Esophagus squamous epithelium (tissue), 5 donors: ENCODE measurements at regions of chr11 and their contacts with region 1.

Region 1: GRCh38 chr11:45110562-45110961 is 35.9 kb upstream of the PRDM11 start:
- DNase-seq: no peak
- H3K4me3 ChIP-seq: no peak overlapping the region
- H3K27ac ChIP-seq: no peak overlapping the region
- H3K4me1 ChIP-seq: peaks cover 0 to 6% (median 0%) of the 10 kb centered on the region in 3 donors
- H3K27me3 ChIP-seq: peaks cover 0 to 33% (median 0%) of the 10 kb centered on the region in 4 donors
- CTCF ChIP-seq: peak; percentile 63 to 87 (median 81)
- POLR2A ChIP-seq: no peak

Region 2: GRCh38 chr11:45294499-45294898 is 183.9 kb after region 1 on chr11:
- intact Hi-C with region 1: loop called (anchors 5 kb)
- DNase-seq: no peak
- H3K4me3 ChIP-seq: no peak overlapping the region
- H3K27ac ChIP-seq: no peak overlapping the region
- H3K4me1 ChIP-seq: no peaks in the 10 kb centered on the region
- H3K27me3 ChIP-seq: peaks cover 0 to 36% (median 0%) of the 10 kb centered on the region in 4 donors
- CTCF ChIP-seq: no peak
- POLR2A ChIP-seq: no peak

Region 3: GRCh38 chr11:45332276-45332934 is 221.8 kb after region 1 on chr11:
- intact Hi-C with region 1: loop called (anchors 5 kb)
- DNase-seq: no peak
- H3K4me3 ChIP-seq: peak overlapping the region in 1 of 4 donors; percentile 8
- H3K27ac ChIP-seq: peak overlapping the region in 3 of 4 donors; percentile 7 to 55 (median 42)
- H3K4me1 ChIP-seq: peaks cover 0 to 12% (median 0%) of the 10 kb centered on the region in 3 donors
- H3K27me3 ChIP-seq: peaks cover 0 to 11% (median 0%) of the 10 kb centered on the region in 4 donors
- CTCF ChIP-seq: peak; percentile 31 to 89 (median 43)
- POLR2A ChIP-seq: no peak